ENCODE measurements at regions of chr11 and their contacts with region 1.

Region 1: GRCh38 chr11:124746621-124747243 is 5.3 kb downstream of the VSIG2 start:
- DNase-seq: peak; percentile 85
- H3K4me3 Mint-ChIP-seq: peak overlapping the region; percentile 87
- H3K27ac Mint-ChIP-seq: peak overlapping the region; percentile 89
- H3K4me1 Mint-ChIP-seq: peaks cover 6% of the 10 kb centered on the region
- H3K27me3 Mint-ChIP-seq: no peaks in the 10 kb centered on the region

Region 2: GRCh38 chr11:124622531-124623451 is 123.9 kb before region 1 on chr11 and contains the start of gene TBRG1:
- CTCF ChIA-PET with region 1: no interaction called
- POLR2A ChIA-PET with region 1: no interaction called
- intact Hi-C with region 1: loop called (anchors 2 kb)
- DNase-seq: peak; percentile 87
- H3K4me3 Mint-ChIP-seq: peak within 1 kb of the TSS; percentile 85
- H3K27ac Mint-ChIP-seq: peak within 1 kb of the TSS; percentile 93
- H3K4me1 Mint-ChIP-seq: peaks cover 28% of the 10 kb centered on the region
- H3K27me3 Mint-ChIP-seq: peaks cover 2% of the 10 kb centered on the region
- total RNA-seq, gene TBRG1: 33.5 to 34.5 TPM

Region 3: GRCh38 chr11:124693142-124693541 is 53.6 kb before region 1 on chr11:
- CTCF ChIA-PET with region 1: no interaction called
- POLR2A ChIA-PET with region 1: no interaction called
- intact Hi-C with region 1: no loop called
- DNase-seq: no peak
- H3K4me3 Mint-ChIP-seq: no peak overlapping the region
- H3K27ac Mint-ChIP-seq: no peak overlapping the region
- H3K4me1 Mint-ChIP-seq: no peaks in the 10 kb centered on the region
- H3K27me3 Mint-ChIP-seq: no peaks in the 10 kb centered on the region

Region 4: DNA sequence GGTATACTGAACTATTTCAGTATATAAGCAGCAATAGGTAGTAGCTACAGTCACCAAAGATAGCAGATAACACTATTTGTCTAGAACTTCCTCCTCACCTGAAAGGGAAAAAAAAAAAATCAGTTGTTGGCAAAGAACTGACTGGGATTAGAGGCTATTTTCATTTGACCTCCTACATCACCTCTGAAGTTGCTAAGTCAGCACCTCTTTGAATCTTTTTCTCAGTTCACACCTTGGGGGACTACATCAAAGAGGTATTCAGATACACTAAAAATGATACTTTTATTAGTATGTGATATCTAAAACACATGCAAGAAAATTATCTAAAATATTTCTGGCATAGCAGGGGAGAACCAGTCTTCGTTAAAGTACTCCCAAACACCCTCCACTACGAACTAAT is 37.3 kb after region 1 on chr11:
- CTCF ChIA-PET with region 1: no interaction called
- POLR2A ChIA-PET with region 1: no interaction called
- intact Hi-C with region 1: no loop called
- DNase-seq: no peak
- H3K4me3 Mint-ChIP-seq: no peak overlapping the region
- H3K27ac Mint-ChIP-seq: no peak overlapping the region
- H3K4me1 Mint-ChIP-seq: no peaks in the 10 kb centered on the region
- H3K27me3 Mint-ChIP-seq: no peaks in the 10 kb centered on the region

Region 5: GRCh38 chr11:124800226-124800929 is 53.6 kb after region 1 on chr11 and contains the start of gene MSANTD2:
- CTCF ChIA-PET with region 1: interaction called, 18 read pairs
- POLR2A ChIA-PET with region 1: interaction called, 9 read pairs
- intact Hi-C with region 1: loop called (anchors 2 kb)
- DNase-seq: peak; percentile 87
- H3K4me3 Mint-ChIP-seq: peak within 1 kb of the TSS; percentile 89
- H3K27ac Mint-ChIP-seq: peak within 1 kb of the TSS; percentile 94
- H3K4me1 Mint-ChIP-seq: peaks cover 29% of the 10 kb centered on the region
- H3K27me3 Mint-ChIP-seq: no peaks in the 10 kb centered on the region
- total RNA-seq, gene MSANTD2: 6.1 to 6.4 TPM

Region 6: DNA sequence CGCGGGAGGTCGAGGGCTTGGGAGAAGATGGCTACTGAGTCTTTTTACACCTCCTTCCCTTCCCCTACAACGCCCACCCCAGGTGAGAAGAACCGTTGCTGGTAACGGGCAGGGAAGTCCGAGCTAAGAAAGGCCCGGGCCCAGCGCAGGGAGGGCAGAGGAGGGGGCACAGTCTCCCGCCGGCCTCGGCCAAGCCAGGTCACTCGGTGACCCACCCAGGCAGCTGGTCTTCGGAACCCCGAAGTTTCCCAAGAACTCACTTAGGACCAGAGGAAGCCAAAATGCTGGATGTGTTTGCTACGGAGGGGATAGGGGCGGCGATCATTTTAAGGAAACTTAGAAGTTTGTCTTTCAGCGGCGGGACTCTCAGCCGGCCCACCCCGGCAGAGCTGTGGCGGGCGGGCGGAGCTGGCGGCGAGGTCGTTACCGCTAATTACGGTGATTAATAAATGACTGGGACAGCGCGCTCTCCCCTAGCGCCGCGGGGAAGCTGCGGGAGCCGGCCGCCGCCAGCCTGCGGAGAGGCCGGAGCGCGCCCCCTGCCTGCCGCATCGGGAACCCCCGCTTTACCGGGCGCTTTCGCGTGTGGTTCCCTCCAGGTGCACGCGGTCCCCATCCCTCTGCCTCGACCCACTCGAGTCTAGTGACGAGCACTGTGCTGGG is 119.3 kb after region 1 on chr11:
- CTCF ChIA-PET with region 1: no interaction called
- POLR2A ChIA-PET with region 1: no interaction called
- intact Hi-C with region 1: loop called (anchors 5 kb)
- DNase-seq: peak; percentile 68
- H3K4me3 Mint-ChIP-seq: no peak overlapping the region
- H3K27ac Mint-ChIP-seq: no peak overlapping the region
- H3K4me1 Mint-ChIP-seq: peaks cover 36% of the 10 kb centered on the region
- H3K27me3 Mint-ChIP-seq: peaks cover 77% of the 10 kb centered on the region

Region 7: DNA sequence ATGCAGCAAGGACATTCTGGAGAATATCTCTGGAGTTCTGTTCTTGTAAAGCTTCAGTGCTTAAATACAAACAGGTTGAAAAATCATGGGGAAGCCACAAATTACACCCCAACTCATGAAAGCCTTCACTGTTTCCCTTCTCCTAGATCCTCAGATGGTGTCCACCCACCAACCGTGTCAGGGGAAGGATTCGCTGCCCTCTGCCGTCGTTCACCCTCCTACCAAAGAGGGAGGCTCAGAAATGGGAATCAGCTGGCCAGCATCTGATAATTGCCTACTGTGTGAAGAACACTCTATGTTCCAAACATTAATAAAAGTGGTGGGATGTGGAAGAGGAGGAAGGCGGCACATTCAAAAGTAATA is 196.5 kb after region 1 on chr11:
- CTCF ChIA-PET with region 1: no interaction called
- POLR2A ChIA-PET with region 1: no interaction called
- intact Hi-C with region 1: no loop called
- DNase-seq: no peak
- H3K4me3 Mint-ChIP-seq: no peak overlapping the region
- H3K27ac Mint-ChIP-seq: no peak overlapping the region
- H3K4me1 Mint-ChIP-seq: peaks cover 3% of the 10 kb centered on the region
- H3K27me3 Mint-ChIP-seq: no peaks in the 10 kb centered on the region

Region 8: GRCh38 chr11:125514336-125515101 is 767.8 kb after region 1 on chr11:
- CTCF ChIA-PET with region 1: no interaction called
- POLR2A ChIA-PET with region 1: no interaction called
- intact Hi-C with region 1: loop called (anchors 5 kb)
- DNase-seq: peak; percentile 79
- H3K4me3 Mint-ChIP-seq: no peak overlapping the region
- H3K27ac Mint-ChIP-seq: peak overlapping the region; percentile 82
- H3K4me1 Mint-ChIP-seq: peaks cover 25% of the 10 kb centered on the region
- H3K27me3 Mint-ChIP-seq: no peaks in the 10 kb centered on the region